Activated CD4-positive, alpha-beta memory T cell treated with anti-CD3 and anti-CD28 coated beads, Interleukin-2, amount 10 ng/mL, durations not matched to agents 7 days and 5 days (primary cell): ENCODE measurements at regions of chr1 and their contacts with region 1.

Region 1: GRCh38 chr1:30779294-30780071 is 21.9 kb upstream of the LAPTM5 start:
- DNase-seq: peak; percentile 91
- H3K4me3 Mint-ChIP-seq: no peak overlapping the region
- H3K27ac Mint-ChIP-seq: no peak overlapping the region
- H3K4me1 Mint-ChIP-seq: peaks cover 5% of the 10 kb centered on the region
- H3K27me3 Mint-ChIP-seq: peaks cover 9% of the 10 kb centered on the region

Region 2: GRCh38 chr1:30645807-30646206 is 133.7 kb before region 1 on chr1:
- CTCF ChIA-PET with region 1: no interaction called
- POLR2A ChIA-PET with region 1: no interaction called
- DNase-seq: no peak
- H3K4me3 Mint-ChIP-seq: no peak overlapping the region
- H3K27ac Mint-ChIP-seq: no peak overlapping the region
- H3K4me1 Mint-ChIP-seq: no peaks in the 10 kb centered on the region
- H3K27me3 Mint-ChIP-seq: peaks cover 12% of the 10 kb centered on the region

Region 3: GRCh38 chr1:30668024-30668423 is 111.5 kb before region 1 on chr1:
- CTCF ChIA-PET with region 1: no interaction called
- POLR2A ChIA-PET with region 1: no interaction called
- DNase-seq: no peak
- H3K4me3 Mint-ChIP-seq: no peak overlapping the region
- H3K27ac Mint-ChIP-seq: no peak overlapping the region
- H3K4me1 Mint-ChIP-seq: no peaks in the 10 kb centered on the region
- H3K27me3 Mint-ChIP-seq: no peaks in the 10 kb centered on the region

Region 4: GRCh38 chr1:30718636-30719405 is 60.7 kb before region 1 on chr1:
- CTCF ChIA-PET with region 1: interaction called, 494 read pairs
- POLR2A ChIA-PET with region 1: interaction called, 36 read pairs
- DNase-seq: peak; percentile 85
- H3K4me3 Mint-ChIP-seq: peak overlapping the region; percentile 94
- H3K27ac Mint-ChIP-seq: peak overlapping the region; percentile 91
- H3K4me1 Mint-ChIP-seq: peaks cover 18% of the 10 kb centered on the region
- H3K27me3 Mint-ChIP-seq: no peaks in the 10 kb centered on the region

Region 5: DNA sequence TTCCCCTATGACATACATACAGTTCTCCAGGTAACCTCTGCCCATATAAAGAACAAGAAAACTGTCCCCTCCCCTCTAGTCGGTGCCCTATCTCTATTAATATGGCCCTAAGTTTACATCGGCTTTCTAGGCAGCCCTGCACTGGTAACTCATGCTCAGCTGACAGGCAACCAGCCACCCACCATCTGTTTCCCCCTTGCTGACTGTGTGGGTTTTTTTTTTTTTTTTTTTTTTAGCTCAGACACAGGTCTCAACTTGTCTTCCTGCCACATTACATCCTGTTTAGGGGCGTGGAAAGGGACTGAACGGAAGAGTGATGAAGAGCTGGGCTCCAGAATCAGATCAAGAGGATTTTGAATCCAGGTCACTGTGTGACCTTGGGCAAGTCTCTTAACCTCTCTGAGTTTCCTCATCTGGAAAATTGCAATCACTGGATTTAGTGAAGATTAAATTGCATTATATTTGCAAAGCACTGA is 35.9 kb before region 1 on chr1:
- CTCF ChIA-PET with region 1: interaction called, 37 read pairs
- POLR2A ChIA-PET with region 1: interaction called, 6 read pairs
- DNase-seq: peak; percentile 82
- H3K4me3 Mint-ChIP-seq: peak overlapping the region; percentile 56
- H3K27ac Mint-ChIP-seq: peak overlapping the region; percentile 91
- H3K4me1 Mint-ChIP-seq: peaks cover 99% of the 10 kb centered on the region
- H3K27me3 Mint-ChIP-seq: no peaks in the 10 kb centered on the region

Region 6: GRCh38 chr1:30756545-30757195 is 22.8 kb before region 1 on chr1:
- CTCF ChIA-PET with region 1: interaction called, 117 read pairs
- POLR2A ChIA-PET with region 1: interaction called, 4 read pairs
- DNase-seq: peak; percentile 84
- H3K4me3 Mint-ChIP-seq: peak overlapping the region; percentile 95
- H3K27ac Mint-ChIP-seq: peak overlapping the region; percentile 93
- H3K4me1 Mint-ChIP-seq: peaks cover 87% of the 10 kb centered on the region
- H3K27me3 Mint-ChIP-seq: no peaks in the 10 kb centered on the region

Region 7: GRCh38 chr1:30911046-30911954 is 131.8 kb after region 1 on chr1:
- CTCF ChIA-PET with region 1: interaction called, 21 read pairs
- POLR2A ChIA-PET with region 1: no interaction called
- DNase-seq: peak; percentile 62
- H3K4me3 Mint-ChIP-seq: no peak overlapping the region
- H3K27ac Mint-ChIP-seq: no peak overlapping the region
- H3K4me1 Mint-ChIP-seq: peaks cover 19% of the 10 kb centered on the region
- H3K27me3 Mint-ChIP-seq: peaks cover 34% of the 10 kb centered on the region